IMR-90 (cell line): ENCODE measurements at regions of chr6 and their contacts with region 1.

Region 1: DNA sequence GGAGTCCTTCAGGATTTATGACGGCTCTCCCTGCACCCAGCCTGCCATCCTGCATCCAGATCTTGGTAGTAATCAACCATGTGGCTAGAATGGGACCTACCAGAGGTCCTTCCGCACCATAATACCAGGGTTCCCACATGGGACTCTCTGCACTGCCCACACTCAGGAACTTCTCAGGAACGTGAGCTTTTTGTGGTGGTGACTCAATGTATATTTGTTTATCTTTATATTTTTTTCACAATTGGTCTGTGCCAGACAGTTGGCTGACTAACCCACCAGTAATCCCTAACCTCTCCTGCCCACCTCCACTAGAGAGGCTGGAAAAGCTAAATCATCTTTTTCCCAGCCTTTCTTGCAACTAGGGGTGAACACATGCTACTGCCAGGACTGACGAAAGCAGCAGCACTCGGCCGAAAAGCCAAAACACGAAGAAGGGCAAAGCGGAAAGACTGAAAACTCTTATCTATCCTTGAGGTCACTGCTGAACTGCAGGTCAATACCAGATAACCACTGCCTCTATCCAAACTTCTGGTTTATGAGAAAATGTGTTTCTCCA is 113.0 kb downstream of the TRERF1 start:
- DNase-seq: peak; percentile 99
- ATAC-seq: peak; percentile 95
- H3K4me3 ChIP-seq: no peak overlapping the region; the same call in 1 of the 2 replicates
- H3K27ac ChIP-seq: peak overlapping the region; percentile 58
- H3K4me1 ChIP-seq: peaks cover 17% of the 10 kb centered on the region
- H3K27me3 ChIP-seq: no peaks in the 10 kb centered on the region
- CTCF ChIP-seq: peak; percentile 28; the same call in 1 of the 2 replicates
- POLR2A ChIP-seq: peak; percentile 52; the same call in 1 of the 2 replicates
- RAD21 ChIP-seq: peak; percentile 39; the same call in 1 of the 2 replicates

Region 2: GRCh38 chr6:42224222-42224989 is 114.3 kb before region 1 on chr6:
- CTCF ChIA-PET with region 1: no interaction called
- POLR2A ChIA-PET with region 1: no interaction called
- dilution Hi-C with region 1: no loop called
- in situ Hi-C with region 1: no loop called
- intact Hi-C with region 1: loop called (anchors 10 kb)
- DNase-seq: peak; percentile 97
- ATAC-seq: peak; percentile 58
- H3K4me3 ChIP-seq: peak overlapping the region; percentile 27; the same call in 1 of the 2 replicates
- H3K27ac ChIP-seq: peak overlapping the region; percentile 13; the same call in 1 of the 2 replicates
- H3K4me1 ChIP-seq: peaks cover 15% of the 10 kb centered on the region
- H3K27me3 ChIP-seq: no peaks in the 10 kb centered on the region
- CTCF ChIP-seq: no peak
- POLR2A ChIP-seq: no peak
- RAD21 ChIP-seq: no peak

Region 3: GRCh38 chr6:42315991-42316378 is 22.8 kb before region 1 on chr6:
- CTCF ChIA-PET with region 1: interaction called, 3 read pairs
- POLR2A ChIA-PET with region 1: no interaction called
- dilution Hi-C with region 1: no loop called
- in situ Hi-C with region 1: no loop called
- intact Hi-C with region 1: loop called (anchors 2 kb)
- DNase-seq: peak; percentile 99
- ATAC-seq: peak; percentile 79
- H3K4me3 ChIP-seq: no peak overlapping the region
- H3K27ac ChIP-seq: peak overlapping the region; percentile 93
- H3K4me1 ChIP-seq: peaks cover 41% of the 10 kb centered on the region
- H3K27me3 ChIP-seq: no peaks in the 10 kb centered on the region
- CTCF ChIP-seq: no peak
- POLR2A ChIP-seq: no peak
- RAD21 ChIP-seq: peak; percentile 19; the same call in 1 of the 2 replicates

Region 4: GRCh38 chr6:42947950-42948349 is 609.2 kb after region 1 on chr6:
- CTCF ChIA-PET with region 1: no interaction called
- POLR2A ChIA-PET with region 1: no interaction called
- dilution Hi-C with region 1: no loop called
- in situ Hi-C with region 1: no loop called
- intact Hi-C with region 1: no loop called
- DNase-seq: no peak
- ATAC-seq: no peak
- H3K4me3 ChIP-seq: no peak overlapping the region
- H3K27ac ChIP-seq: no peak overlapping the region
- H3K4me1 ChIP-seq: no peaks in the 10 kb centered on the region
- H3K27me3 ChIP-seq: no peaks in the 10 kb centered on the region
- CTCF ChIP-seq: no peak
- POLR2A ChIP-seq: no peak
- RAD21 ChIP-seq: no peak